Posterior vena cava (tissue), 2 donors: ENCODE measurements at regions of chr7 and their contacts with region 1.

Region 1: GRCh38 chr7:80699721-80700256 is 61.3 kb downstream of the CD36 start:
- DNase-seq: no peak

Region 2: GRCh38 chr7:80640846-80641245 is 58.9 kb before region 1 on chr7:
- intact Hi-C with region 1: no loop called
- DNase-seq: no peak

Region 3: GRCh38 chr7:81457852-81458522 is 758.2 kb after region 1 on chr7:
- intact Hi-C with region 1: loop called in 1 of 2 experiments (anchors 10 kb)
- DNase-seq: no peak

Region 4: GRCh38 chr7:81469869-81470723 is 770.3 kb after region 1 on chr7:
- intact Hi-C with region 1: loop called in 1 of 2 experiments (anchors 5 kb)
- DNase-seq: peak; percentile 86